ENCODE measurements at regions of chr19 and their contacts with region 1.

Region 1: DNA sequence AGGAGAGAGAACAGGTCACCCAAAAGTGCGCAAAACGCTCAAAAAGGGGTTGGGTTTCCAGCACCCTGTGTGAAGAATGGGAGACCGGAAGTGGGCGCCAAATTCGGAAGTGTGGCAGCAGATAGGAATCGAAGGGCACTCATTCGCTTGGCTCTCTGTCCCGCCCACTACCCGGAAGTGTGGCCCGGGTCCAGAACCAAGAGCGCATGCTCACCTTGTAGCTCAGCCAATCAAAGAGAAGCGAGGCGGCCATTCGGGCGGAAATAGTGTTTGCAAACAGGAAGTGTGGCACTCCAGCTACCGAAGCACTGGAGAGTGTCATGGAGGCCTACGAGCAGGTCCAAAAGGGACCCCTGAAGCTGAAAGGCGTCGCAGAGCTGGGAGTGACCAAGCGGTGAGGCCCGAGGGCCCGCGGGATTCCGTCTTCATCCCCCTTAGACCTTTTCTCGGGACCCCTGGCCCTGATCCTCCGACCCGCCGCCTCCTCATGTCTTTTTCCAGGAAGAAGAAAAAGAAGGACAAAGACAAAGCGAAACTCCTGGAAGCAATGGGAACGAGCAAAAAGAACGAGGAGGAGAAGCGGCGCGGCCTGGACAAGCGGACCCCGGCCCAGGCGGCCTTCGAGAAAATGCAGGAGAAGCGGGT is at the start of gene FAM32A:
- DNase-seq: peak; percentile 99
- ATAC-seq: peak; percentile 98
- H3K4me3 ChIP-seq: peak within 1 kb of the TSS; percentile 69
- H3K27ac ChIP-seq: peak within 1 kb of the TSS; percentile 82
- H3K4me1 ChIP-seq: peaks cover 16% of the 10 kb centered on the region
- H3K27me3 ChIP-seq: no peaks in the 10 kb centered on the region
- CTCF ChIP-seq: peak; percentile 37
- total RNA-seq, gene FAM32A: 56.4 TPM

Region 2: GRCh38 chr19:16041299-16041990 is 143.8 kb before region 1 on chr19:
- intact Hi-C with region 1: loop called (anchors 5 kb)
- DNase-seq: peak; percentile 90
- ATAC-seq: peak; percentile 97
- H3K4me3 ChIP-seq: no peak overlapping the region
- H3K27ac ChIP-seq: no peak overlapping the region
- H3K4me1 ChIP-seq: peaks cover 10% of the 10 kb centered on the region
- H3K27me3 ChIP-seq: no peaks in the 10 kb centered on the region
- CTCF ChIP-seq: peak; percentile 99